ENCODE measurements at regions of chr1 and their contacts with region 1.

Region 1: DNA sequence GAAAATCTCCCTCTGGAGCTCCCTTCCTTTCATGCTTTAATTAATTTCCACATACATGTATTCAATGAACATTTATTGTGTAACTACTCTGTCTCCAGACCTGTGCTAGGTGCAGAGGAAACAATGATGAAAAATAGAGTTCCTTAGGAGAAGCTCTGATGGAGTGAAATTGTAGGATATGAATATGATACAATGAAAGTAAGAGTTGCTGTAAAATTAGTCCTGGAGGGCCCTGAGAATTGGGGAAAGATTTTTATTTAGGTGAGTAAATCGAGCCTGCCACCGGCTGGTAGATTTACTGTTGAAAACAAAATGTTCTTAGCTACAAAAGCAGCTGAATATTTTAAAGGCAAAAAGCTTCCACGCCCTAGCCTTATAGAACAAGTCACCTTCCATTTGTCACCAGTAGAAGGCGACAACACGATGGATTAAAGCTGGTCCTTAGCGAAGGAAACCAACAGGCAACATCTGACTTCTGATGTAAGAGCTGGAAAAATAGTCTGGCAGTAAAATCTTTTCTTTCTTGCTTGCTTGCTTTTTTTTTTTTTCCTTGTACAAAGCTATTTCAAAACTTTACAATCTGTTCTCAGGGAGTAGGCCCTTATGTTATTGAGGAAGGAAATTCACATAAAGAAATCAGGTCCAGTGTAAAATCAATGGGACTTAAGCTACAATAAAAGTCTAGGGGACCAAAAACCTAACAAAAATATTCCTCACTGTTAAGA is 82.0 kb upstream of the ROR1 start:
- DNase-seq: peak; percentile 94
- ATAC-seq: peak; percentile 89
- H3K4me3 ChIP-seq: no peak overlapping the region
- H3K27ac ChIP-seq: no peak overlapping the region
- H3K4me1 ChIP-seq: peaks cover 2% of the 10 kb centered on the region; the same call in 1 of the 2 replicates
- H3K27me3 ChIP-seq: no peaks in the 10 kb centered on the region; the same call in 1 of the 2 replicates
- CTCF ChIP-seq: peak; percentile 84
- POLR2A ChIP-seq: no peak
- RAD21 ChIP-seq: peak; percentile 87

Region 2: DNA sequence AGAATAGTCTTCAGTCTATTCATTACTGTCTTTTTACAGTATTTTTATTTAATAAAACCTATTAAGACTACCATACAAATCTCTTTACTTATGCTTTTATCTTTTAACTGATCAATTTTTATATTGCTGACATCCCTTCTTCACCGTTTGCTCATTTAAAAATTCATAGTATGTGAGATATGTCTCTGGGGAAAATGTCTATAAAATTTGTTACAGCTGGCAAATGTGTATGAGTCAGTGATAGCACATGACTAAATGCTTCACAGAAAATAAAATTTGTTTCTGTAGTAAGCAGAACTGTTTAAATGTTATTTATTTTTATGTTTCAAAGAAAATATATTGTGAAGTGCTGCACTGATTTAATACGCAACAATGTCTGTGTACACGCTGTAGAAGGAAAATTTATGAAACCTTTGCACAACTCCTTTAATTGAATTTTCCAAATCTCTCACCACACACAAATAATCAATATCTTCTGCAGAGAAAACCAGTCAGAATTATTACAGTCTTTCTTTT is 243.1 kb before region 1 on chr1:
- CTCF ChIA-PET with region 1: no interaction called
- POLR2A ChIA-PET with region 1: no interaction called
- dilution Hi-C with region 1: no loop called
- in situ Hi-C with region 1: no loop called
- intact Hi-C with region 1: no loop called
- DNase-seq: peak; percentile 37
- ATAC-seq: peak; percentile 51; the same call in 1 of the 2 replicates
- H3K4me3 ChIP-seq: no peak overlapping the region
- H3K27ac ChIP-seq: no peak overlapping the region
- H3K4me1 ChIP-seq: peaks cover 2% of the 10 kb centered on the region; the same call in 1 of the 2 replicates
- H3K27me3 ChIP-seq: no peaks in the 10 kb centered on the region
- CTCF ChIP-seq: no peak
- POLR2A ChIP-seq: no peak
- RAD21 ChIP-seq: no peak

Region 3: DNA sequence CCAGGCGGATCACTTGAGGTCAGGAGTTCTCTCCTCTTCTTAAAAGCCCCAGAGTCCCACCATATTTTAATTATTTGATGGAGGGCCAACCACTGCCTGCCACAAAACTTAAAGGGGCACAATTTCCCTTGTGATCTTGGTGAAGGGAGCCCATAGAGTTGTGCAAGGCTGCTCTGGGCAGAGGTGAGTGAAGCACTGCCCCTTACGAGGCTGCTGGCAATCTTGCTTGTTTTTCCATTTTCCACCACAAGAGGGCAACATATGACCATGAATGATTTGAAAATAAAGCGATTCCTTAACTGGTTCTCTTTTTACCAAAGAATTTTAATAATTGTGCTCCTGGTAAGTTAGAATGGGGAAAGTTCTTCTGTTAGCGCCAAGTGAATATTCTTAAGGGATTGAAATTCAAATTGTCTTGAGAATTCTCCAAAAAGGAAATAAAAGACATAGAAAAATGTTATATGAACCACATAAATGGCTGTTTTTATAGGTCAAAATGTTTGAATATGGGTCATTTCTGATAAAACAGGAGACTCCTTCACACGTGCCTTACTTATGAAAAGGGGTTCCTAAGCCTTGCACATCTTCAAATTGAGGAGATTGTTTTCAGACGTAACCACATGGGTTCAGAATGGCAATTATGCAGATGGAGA is 76.0 kb before region 1 on chr1:
- CTCF ChIA-PET with region 1: interaction called, 5 read pairs
- POLR2A ChIA-PET with region 1: no interaction called
- dilution Hi-C with region 1: no loop called
- in situ Hi-C with region 1: no loop called
- intact Hi-C with region 1: loop called (anchors 5 kb)
- DNase-seq: peak; percentile 75
- ATAC-seq: peak; percentile 78
- H3K4me3 ChIP-seq: no peak overlapping the region
- H3K27ac ChIP-seq: no peak overlapping the region
- H3K4me1 ChIP-seq: peaks cover 11% of the 10 kb centered on the region
- H3K27me3 ChIP-seq: no peaks in the 10 kb centered on the region
- CTCF ChIP-seq: peak; percentile 81
- POLR2A ChIP-seq: no peak
- RAD21 ChIP-seq: peak; percentile 85